ENCODE measurements at regions of chr10 and their contacts with region 1.

Region 1: DNA sequence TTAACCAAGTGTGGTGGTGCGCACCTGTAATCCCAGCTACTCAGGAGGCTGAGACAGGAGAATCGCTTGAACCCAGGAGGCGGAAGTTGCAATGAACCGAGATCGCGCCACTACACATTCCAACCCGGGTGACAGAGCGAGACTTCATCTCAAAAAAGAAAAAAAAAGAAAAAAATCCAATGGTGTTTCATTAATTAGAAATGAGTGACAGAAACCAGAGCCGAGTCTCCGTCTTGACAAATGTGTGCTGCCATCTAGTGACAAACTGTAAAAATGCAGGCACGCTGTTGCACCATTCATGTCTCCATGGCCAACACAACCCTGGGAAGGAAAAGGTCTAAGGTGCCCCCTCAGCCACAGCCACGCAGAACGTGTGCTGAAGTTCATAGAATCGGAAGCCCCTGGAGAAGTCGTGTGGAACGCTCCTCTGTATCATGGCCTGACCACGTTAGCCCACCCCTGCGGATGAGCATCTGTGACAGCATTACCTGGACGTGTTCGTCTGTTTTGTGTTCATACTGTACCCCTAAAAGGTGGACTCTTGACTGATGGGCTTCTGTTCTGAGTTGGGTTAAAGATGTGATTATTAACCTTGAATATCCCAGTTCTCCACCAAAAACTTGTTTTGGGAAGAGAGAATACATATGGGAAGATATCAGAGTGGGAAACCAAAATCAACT is 94.9 kb downstream of the LYZL2 start:
- DNase-seq: peak; percentile 30 to 84 (median 69)
- ATAC-seq: peak; percentile 25 to 41
- H3K4me3 Mint-ChIP-seq: no peak overlapping the region
- H3K27ac Mint-ChIP-seq: peak overlapping the region in 1 of 10 donors; percentile 23
- H3K4me1 Mint-ChIP-seq: peaks cover 7 to 53% (median 19%) of the 10 kb centered on the region in 4 donors
- H3K27me3 Mint-ChIP-seq: peaks cover 0 to 2% (median 0%) of the 10 kb centered on the region in 5 donors

Region 2: GRCh38 chr10:30415593-30415992 is 119.0 kb before region 1 on chr10:
- POLR2A ChIA-PET with region 1: interaction called, 10 read pairs
- DNase-seq: no peak
- ATAC-seq: no peak
- H3K4me3 Mint-ChIP-seq: peak overlapping the region in 1 of 10 donors; percentile 6
- H3K27ac Mint-ChIP-seq: peak overlapping the region in 2 of 10 donors; percentile 21 to 46
- H3K4me1 Mint-ChIP-seq: peaks cover 4 to 47% (median 21%) of the 10 kb centered on the region in 4 donors
- H3K27me3 Mint-ChIP-seq: no peaks in the 10 kb centered on the region

Measured in naive thymus-derived CD8-positive, alpha-beta T cell (primary cell).